ENCODE measurements at regions of chr1 and their contacts with region 1.

Region 1: GRCh38 chr1:225777583-225778336 is at the start of gene SRP9:
- DNase-seq: peak; percentile 99
- H3K4me3 ChIP-seq: peak within 1 kb of the TSS; percentile 68 to 94
- H3K4me3 Mint-ChIP-seq: no peak within 1 kb of the TSS
- H3K27ac ChIP-seq: peak within 1 kb of the TSS; percentile 94
- H3K27ac Mint-ChIP-seq: no peak within 1 kb of the TSS
- H3K4me1 ChIP-seq: peaks cover 57% of the 10 kb centered on the region
- H3K4me1 Mint-ChIP-seq: peaks cover 0 to 32% (median 27%) of the 10 kb centered on the region in 4 donors
- H3K27me3 ChIP-seq: no peaks in the 10 kb centered on the region
- H3K27me3 Mint-ChIP-seq: no peaks in the 10 kb centered on the region
- total RNA-seq, gene SRP9: 141 to 151 TPM

Region 2: GRCh38 chr1:225366552-225366951 is 411.2 kb before region 1 on chr1:
- CTCF ChIA-PET with region 1: no interaction called
- POLR2A ChIA-PET with region 1: no interaction called
- intact Hi-C with region 1: no loop called
- DNase-seq: no peak
- H3K4me3 ChIP-seq: no peak overlapping the region
- H3K4me3 Mint-ChIP-seq: no peak overlapping the region
- H3K27ac ChIP-seq: no peak overlapping the region
- H3K27ac Mint-ChIP-seq: no peak overlapping the region
- H3K4me1 ChIP-seq: no peaks in the 10 kb centered on the region
- H3K4me1 Mint-ChIP-seq: no peaks in the 10 kb centered on the region
- H3K27me3 ChIP-seq: no peaks in the 10 kb centered on the region
- H3K27me3 Mint-ChIP-seq: peaks cover 7 to 10% of the 10 kb centered on the region in 2 donors

Region 3: DNA sequence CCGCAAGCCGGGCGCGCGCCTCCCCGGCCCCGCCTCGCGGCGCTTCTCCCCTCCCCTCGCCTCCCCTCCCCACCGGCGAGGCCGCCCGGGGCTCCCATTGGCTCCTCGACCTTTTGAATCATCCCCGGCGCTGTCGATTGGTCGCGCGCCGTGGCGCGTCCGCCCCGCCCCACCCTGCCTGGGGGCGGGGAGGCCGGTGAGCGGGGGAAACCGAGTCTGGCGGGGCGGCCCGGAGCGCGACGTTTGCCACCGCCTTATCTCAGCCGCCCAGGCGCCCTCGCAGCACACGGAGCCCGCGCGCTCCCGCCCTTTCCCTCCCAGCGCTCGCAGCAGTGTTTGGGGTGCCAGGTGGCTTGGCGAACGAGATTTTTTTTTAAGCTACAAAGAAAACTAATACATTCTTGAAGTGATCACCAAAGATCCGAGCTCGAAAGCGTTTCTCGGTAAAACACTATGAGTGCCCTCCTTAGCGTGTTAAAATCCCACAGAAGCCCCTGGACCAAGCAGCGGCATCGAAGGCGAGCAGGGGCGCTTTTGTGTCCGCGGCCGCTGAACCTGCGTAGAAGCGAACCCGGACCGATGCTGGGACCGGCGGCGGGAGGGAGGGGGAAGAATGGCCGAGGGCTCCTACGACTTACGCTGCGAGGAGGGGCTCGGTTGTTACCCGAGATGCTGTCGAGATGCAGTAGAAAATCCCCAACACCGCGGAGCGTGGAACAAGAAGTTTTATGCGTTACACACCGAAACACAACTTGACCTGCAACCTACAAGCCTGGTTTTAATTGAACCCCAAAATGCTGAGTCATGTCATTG is 349.5 kb before region 1 on chr1:
- CTCF ChIA-PET with region 1: no interaction called
- POLR2A ChIA-PET with region 1: interaction called, 15 read pairs
- intact Hi-C with region 1: loop called (anchors 5 kb)
- DNase-seq: peak; percentile 91 to 92 (median 91)
- H3K4me3 ChIP-seq: peak overlapping the region; percentile 68 to 75
- H3K4me3 Mint-ChIP-seq: peak overlapping the region; percentile 84 to 97 (median 92)
- H3K27ac ChIP-seq: peak overlapping the region; percentile 78
- H3K27ac Mint-ChIP-seq: peak overlapping the region; percentile 86 to 97 (median 96)
- H3K4me1 ChIP-seq: peaks cover 41% of the 10 kb centered on the region
- H3K4me1 Mint-ChIP-seq: peaks cover 38 to 49% (median 44%) of the 10 kb centered on the region in 4 donors
- H3K27me3 ChIP-seq: no peaks in the 10 kb centered on the region
- H3K27me3 Mint-ChIP-seq: no peaks in the 10 kb centered on the region

Region 4: DNA sequence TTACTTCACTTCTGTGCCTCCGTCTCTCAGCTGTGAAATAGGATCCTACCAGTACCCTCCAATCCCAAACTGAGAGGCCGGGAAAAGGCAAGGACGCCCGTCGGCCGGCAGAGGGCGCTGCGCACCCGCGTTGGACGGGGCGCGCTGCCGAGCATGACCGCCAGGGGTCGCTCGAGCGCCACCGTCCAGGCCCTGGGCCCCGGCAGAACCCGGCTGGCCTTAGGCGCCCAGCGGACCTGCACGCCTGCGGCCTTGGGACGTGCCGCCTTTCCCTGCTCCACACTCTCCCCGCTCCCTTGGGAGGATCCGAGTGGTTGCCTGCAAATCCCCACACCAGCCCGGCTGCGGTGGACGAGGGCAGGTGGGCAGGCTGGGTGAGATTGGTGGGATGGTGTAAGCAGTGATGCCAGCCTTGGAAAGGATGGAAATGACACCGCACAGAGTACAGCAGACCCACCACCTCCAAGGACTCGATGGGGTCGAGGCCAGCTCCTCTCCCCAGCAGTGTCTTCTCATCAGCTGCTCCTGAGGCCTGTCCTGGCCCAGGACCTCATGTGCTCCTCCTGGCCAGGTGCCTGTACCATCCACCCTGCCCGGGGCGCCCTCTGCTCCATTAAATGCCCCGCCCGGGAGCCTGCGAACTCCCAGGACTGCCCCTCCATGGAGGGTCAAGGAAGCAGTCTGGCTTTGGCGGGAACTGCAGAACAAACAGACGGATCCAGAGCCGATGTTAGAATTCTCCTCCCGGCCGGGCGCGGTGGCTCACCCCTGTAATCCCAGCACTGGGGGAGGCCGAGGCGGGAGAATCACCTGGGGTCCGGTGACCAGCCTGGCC is 302.6 kb before region 1 on chr1:
- CTCF ChIA-PET with region 1: interaction called, 7 read pairs
- POLR2A ChIA-PET with region 1: interaction called, 6 read pairs
- intact Hi-C with region 1: loop called (anchors 2 kb)
- DNase-seq: peak in 4 of 5 donors; percentile 66 to 80 (median 69)
- H3K4me3 ChIP-seq: no peak overlapping the region
- H3K4me3 Mint-ChIP-seq: no peak overlapping the region
- H3K27ac ChIP-seq: no peak overlapping the region
- H3K27ac Mint-ChIP-seq: peak overlapping the region in 5 of 7 donors; percentile 5 to 75 (median 23)
- H3K4me1 ChIP-seq: peaks cover 36% of the 10 kb centered on the region
- H3K4me1 Mint-ChIP-seq: peaks cover 27 to 50% (median 35%) of the 10 kb centered on the region in 4 donors
- H3K27me3 ChIP-seq: no peaks in the 10 kb centered on the region
- H3K27me3 Mint-ChIP-seq: peaks cover 0 to 3% of the 10 kb centered on the region in 2 donors

Region 5: DNA sequence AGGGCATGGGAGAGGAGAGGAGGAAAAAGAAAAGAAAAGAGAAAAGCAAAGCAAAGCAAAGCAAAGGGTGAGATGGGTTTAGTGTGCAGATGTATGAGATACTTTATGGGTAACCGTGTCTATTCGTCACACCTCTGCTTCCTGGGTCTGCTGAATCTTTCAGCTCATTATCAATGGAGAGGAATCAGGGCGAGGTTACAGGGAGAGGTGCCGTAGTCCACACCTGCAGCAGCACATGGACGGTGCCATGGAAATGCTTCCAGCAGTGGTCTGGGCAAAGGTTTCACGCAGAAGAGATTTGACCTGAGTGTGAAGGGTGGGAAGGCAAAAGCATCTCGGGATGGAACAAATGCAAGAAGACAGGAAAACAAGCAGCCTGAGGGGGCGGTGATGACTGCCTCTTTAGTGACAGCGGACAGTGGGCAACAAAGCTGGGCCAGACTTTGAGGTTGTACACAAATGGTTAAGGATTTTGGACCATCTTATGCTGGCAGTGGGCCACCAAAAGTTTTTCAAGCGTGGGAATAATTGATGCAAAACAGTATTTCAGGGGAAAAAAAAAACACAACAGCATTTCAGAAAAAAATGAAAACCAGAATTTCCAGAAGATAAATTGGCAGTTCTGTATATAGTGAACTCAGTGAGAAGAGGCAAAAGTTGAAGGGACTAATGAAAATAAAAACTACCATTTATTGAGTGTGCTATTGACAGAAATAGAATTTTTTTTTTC is 19.7 kb before region 1 on chr1:
- CTCF ChIA-PET with region 1: no interaction called
- POLR2A ChIA-PET with region 1: no interaction called
- intact Hi-C with region 1: no loop called
- DNase-seq: no peak
- H3K4me3 ChIP-seq: no peak overlapping the region
- H3K4me3 Mint-ChIP-seq: no peak overlapping the region
- H3K27ac ChIP-seq: no peak overlapping the region
- H3K27ac Mint-ChIP-seq: peak overlapping the region in 1 of 7 donors; percentile 81
- H3K4me1 ChIP-seq: no peaks in the 10 kb centered on the region
- H3K4me1 Mint-ChIP-seq: no peaks in the 10 kb centered on the region
- H3K27me3 ChIP-seq: no peaks in the 10 kb centered on the region
- H3K27me3 Mint-ChIP-seq: peaks cover 4 to 8% of the 10 kb centered on the region in 2 donors

Region 6: GRCh38 chr1:225809842-225810578 is 32.2 kb after region 1 on chr1 and contains the start of gene EPHX1:
- CTCF ChIA-PET with region 1: interaction called, 6 read pairs
- POLR2A ChIA-PET with region 1: interaction called, 21 read pairs
- intact Hi-C with region 1: loop called (anchors 1 kb)
- DNase-seq: peak; percentile 36 to 62 (median 52)
- H3K4me3 ChIP-seq: peak within 1 kb of the TSS; percentile 27 to 29
- H3K4me3 Mint-ChIP-seq: peak within 1 kb of the TSS; percentile 81 to 91 (median 86)
- H3K27ac ChIP-seq: no peak within 1 kb of the TSS
- H3K27ac Mint-ChIP-seq: peak within 1 kb of the TSS in 1 of 7 donors; percentile 84
- H3K4me1 ChIP-seq: peaks cover 11% of the 10 kb centered on the region
- H3K4me1 Mint-ChIP-seq: peaks cover 5 to 13% (median 6%) of the 10 kb centered on the region in 4 donors
- H3K27me3 ChIP-seq: no peaks in the 10 kb centered on the region
- H3K27me3 Mint-ChIP-seq: peaks cover 0 to 2% of the 10 kb centered on the region in 2 donors
- total RNA-seq, gene EPHX1: 2.1 to 3.0 TPM

Region 7: DNA sequence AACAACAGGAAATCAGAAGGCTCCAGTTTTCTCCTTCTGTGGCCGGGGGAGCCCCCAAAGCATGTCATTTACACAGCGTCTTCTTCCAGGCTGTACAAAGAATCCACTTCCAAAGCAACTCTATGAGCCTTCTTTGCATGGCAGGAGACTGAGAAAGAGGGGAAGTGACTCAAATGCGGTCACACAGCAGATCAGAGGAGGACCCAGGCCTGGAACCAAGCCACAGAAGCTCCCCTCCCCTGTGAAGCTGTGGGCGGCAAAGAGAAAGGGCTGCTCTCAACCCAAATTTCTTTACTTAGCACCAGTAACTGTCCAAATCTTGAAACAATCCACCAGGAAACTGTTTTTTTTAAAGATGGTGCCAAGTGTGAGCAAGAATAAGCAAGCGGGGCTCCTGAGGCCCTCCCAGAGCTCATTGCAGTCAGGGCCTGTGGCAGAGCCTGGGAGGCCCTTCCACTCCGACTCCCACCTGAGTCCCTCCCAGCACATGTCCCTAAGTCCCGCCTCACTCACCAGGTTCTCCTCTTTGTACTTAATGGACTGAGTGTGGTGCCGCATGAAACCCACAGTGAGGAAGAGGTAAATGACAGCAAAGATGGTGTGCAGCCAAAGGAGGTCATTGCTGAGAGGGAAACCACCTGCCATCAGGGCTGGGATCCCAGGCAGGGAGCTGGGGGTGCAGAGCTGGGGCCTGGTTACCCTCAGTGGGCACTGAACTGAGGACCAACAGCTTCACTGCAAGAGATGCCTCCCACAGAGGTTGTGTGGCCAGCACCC is 88.5 kb after region 1 on chr1:
- CTCF ChIA-PET with region 1: interaction called, 5 read pairs
- POLR2A ChIA-PET with region 1: interaction called, 13 read pairs
- intact Hi-C with region 1: loop called (anchors 5 kb)
- DNase-seq: peak; percentile 69 to 89 (median 73)
- H3K4me3 ChIP-seq: no peak overlapping the region
- H3K4me3 Mint-ChIP-seq: peak overlapping the region in 7 of 8 donors; percentile 58 to 85 (median 76)
- H3K27ac ChIP-seq: peak overlapping the region; percentile 52
- H3K27ac Mint-ChIP-seq: peak overlapping the region; percentile 85 to 95 (median 90)
- H3K4me1 ChIP-seq: peaks cover 42% of the 10 kb centered on the region
- H3K4me1 Mint-ChIP-seq: peaks cover 31 to 60% (median 44%) of the 10 kb centered on the region in 4 donors
- H3K27me3 ChIP-seq: no peaks in the 10 kb centered on the region
- H3K27me3 Mint-ChIP-seq: no peaks in the 10 kb centered on the region

Region 8: DNA sequence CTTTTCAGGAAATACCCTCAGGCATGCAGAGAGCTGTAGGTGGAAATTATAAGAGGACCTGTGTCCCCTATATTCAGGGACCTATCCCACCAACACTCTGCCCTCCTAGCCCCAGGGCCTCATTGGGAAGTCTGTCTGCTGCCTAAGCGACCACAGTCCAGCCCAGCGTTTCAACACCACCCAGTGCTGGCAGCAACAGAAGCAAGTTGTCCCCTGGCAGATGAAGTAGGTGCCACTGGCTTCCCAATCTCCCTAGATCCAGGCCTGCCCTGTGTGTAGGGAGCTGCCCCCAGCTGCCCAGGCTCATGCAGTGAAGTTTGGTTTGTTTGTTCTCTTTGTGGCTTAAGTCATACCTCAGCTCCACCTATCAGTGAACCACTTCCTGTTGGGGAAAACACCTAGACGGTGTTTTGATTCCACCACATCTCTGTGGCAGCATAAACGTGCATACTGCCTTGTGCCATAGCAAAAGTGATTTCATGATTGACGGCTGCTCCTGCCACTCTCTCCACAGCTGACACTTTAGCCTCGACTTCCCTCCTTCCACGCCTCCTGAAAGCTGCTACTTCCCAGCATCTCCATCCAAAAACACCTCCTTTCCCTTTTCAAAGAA is 119.3 kb after region 1 on chr1:
- CTCF ChIA-PET with region 1: interaction called, 7 read pairs
- POLR2A ChIA-PET with region 1: interaction called, 61 read pairs
- intact Hi-C with region 1: loop called (anchors 1 kb)
- DNase-seq: peak; percentile 87 to 92 (median 88)
- H3K4me3 ChIP-seq: peak overlapping the region in 1 of 2 donors; percentile 13
- H3K4me3 Mint-ChIP-seq: peak overlapping the region; percentile 72 to 92 (median 82)
- H3K27ac ChIP-seq: peak overlapping the region; percentile 72
- H3K27ac Mint-ChIP-seq: peak overlapping the region; percentile 94 to 99 (median 98)
- H3K4me1 ChIP-seq: peaks cover 45% of the 10 kb centered on the region
- H3K4me1 Mint-ChIP-seq: peaks cover 34 to 65% (median 46%) of the 10 kb centered on the region in 4 donors
- H3K27me3 ChIP-seq: no peaks in the 10 kb centered on the region
- H3K27me3 Mint-ChIP-seq: no peaks in the 10 kb centered on the region

Region 9: DNA sequence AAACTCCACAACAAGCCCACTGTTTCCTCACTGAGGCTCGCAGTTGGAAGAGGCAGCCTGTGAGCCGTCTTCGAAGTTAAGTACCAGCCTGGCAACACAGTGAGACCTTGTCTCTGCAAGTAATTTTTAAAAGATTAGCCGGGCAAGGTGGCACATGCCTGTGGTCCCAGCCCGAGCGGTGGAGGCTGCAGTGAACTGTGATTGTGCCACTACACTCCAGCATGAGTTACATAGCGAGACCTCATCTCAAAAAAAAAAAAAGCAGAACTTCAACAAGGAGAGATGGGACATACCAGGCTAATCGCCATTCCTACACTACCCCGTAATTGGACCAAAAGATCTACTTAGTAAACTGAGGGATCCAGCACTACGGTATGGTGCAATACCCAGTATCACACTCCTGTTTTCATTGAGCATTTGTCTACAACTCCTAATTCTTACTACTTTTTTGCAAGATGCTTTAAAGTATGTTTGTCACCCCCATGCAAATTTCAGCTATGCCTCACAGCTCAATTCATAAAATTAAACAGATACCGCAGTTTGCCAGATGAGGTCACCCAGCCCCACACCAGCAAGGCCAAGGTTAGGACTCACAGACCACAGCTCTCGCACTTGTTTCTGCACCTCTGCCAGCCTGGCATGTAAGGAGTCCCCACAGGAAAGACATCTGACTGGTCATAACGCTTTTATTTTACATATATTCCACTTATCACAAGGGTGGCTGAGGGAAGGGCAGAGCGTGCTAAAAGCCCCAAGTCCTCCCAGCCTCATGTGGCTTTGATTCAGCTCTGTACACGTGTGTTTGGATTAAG is 200.4 kb after region 1 on chr1:
- CTCF ChIA-PET with region 1: interaction called, 3 read pairs
- POLR2A ChIA-PET with region 1: interaction called, 5 read pairs
- intact Hi-C with region 1: loop called (anchors 5 kb)
- DNase-seq: no peak
- H3K4me3 ChIP-seq: no peak overlapping the region
- H3K4me3 Mint-ChIP-seq: no peak overlapping the region
- H3K27ac ChIP-seq: no peak overlapping the region
- H3K27ac Mint-ChIP-seq: peak overlapping the region in 1 of 7 donors; percentile 43
- H3K4me1 ChIP-seq: no peaks in the 10 kb centered on the region
- H3K4me1 Mint-ChIP-seq: peaks cover 0 to 6% (median 5%) of the 10 kb centered on the region in 4 donors
- H3K27me3 ChIP-seq: no peaks in the 10 kb centered on the region
- H3K27me3 Mint-ChIP-seq: no peaks in the 10 kb centered on the region